ENCODE measurements at regions of chr12 and their contacts with region 1.

Region 1: DNA sequence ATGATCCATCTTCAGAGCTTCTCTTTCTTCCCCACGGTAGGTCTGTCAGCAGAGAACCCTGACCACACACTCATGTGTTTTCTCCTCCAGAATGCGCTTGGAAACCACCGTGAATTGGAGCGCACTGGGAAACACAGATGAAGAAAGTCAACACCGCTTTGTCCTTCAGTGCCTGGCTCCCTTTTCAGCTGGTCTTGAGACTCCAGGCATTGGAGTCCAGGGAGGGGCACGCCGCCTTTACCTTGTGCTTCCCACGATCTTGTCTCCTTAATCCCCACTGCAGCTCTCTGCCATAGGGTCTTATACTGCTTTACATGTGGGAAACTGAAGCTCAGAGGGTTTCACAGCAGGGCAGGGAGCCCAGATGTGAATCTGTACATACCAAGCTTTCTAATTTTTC is 1.1 kb downstream of the FAM90A1 start:
- DNase-seq: no peak
- H3K4me3 ChIP-seq: no peak overlapping the region
- H3K27ac ChIP-seq: no peak overlapping the region
- H3K4me1 ChIP-seq: peaks cover 0 to 15% (median 0%) of the 10 kb centered on the region in 6 donors
- H3K27me3 ChIP-seq: peaks cover 0 to 9% (median 0%) of the 10 kb centered on the region in 7 donors
- CTCF ChIP-seq: no peak
- POLR2A ChIP-seq: no peak

Region 2: DNA sequence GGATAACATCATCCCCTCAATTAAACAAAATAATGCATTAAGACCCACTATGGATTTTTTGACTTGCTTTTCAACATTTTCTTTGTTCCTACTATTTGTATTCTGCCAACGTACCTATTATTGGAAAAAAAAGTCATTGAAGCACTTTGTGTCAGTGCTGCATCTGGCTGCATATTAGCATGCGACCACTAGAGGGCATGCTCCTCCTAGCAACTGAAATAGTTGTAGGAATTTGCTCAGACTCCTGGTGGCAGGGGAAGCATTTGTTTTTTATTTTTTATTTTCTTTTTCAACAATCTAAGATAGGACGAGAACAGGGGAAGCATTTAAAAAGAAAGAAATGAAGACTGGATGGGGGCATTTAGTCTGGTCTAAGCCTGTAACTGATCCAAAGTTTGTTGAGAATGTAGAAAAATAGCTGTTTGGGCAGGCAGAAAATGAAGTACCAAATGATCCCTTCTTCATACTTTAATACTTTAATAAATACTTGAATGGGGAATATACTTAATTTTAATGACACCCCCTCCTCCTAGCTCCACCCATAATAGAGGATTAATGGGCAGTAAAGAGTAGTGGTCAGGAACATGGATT is 117.5 kb before region 1 on chr12:
- intact Hi-C with region 1: loop called (anchors 5 kb)
- DNase-seq: peak; percentile 84
- H3K4me3 ChIP-seq: no peak overlapping the region
- H3K27ac ChIP-seq: no peak overlapping the region
- H3K4me1 ChIP-seq: peaks cover 0 to 8% (median 5%) of the 10 kb centered on the region in 6 donors
- H3K27me3 ChIP-seq: no peaks in the 10 kb centered on the region
- CTCF ChIP-seq: peak; percentile 83 to 97 (median 95)
- POLR2A ChIP-seq: no peak

Measured in spleen (tissue), 13 donors.